Spleen (tissue), 13 donors: ENCODE measurements at regions of chr13 and their contacts with region 1.

Region 1: GRCh38 chr13:52194184-52194868 is 34.9 kb upstream of the NEK3 start:
- DNase-seq: peak; percentile 94
- H3K4me3 ChIP-seq: peak overlapping the region; percentile 68 to 98 (median 78)
- H3K27ac ChIP-seq: peak overlapping the region; percentile 80 to 91 (median 86)
- H3K4me1 ChIP-seq: peaks cover 14 to 49% (median 31%) of the 10 kb centered on the region in 6 donors
- H3K27me3 ChIP-seq: no peaks in the 10 kb centered on the region
- CTCF ChIP-seq: peak in 1 of 11 experiments; percentile 11
- POLR2A ChIP-seq: no peak

Region 2: GRCh38 chr13:52011632-52012511 is 182.5 kb before region 1 on chr13 and contains the start of gene ALG11:
- intact Hi-C with region 1: loop called (anchors 10 kb)
- DNase-seq: peak; percentile 98
- H3K4me3 ChIP-seq: peak within 1 kb of the TSS; percentile 82 to 100 (median 98)
- H3K27ac ChIP-seq: peak within 1 kb of the TSS; percentile 13 to 83 (median 70)
- H3K4me1 ChIP-seq: peaks cover 17 to 49% (median 34%) of the 10 kb centered on the region in 6 donors
- H3K27me3 ChIP-seq: peaks cover 0 to 33% (median 8%) of the 10 kb centered on the region in 7 donors
- CTCF ChIP-seq: peak in 3 of 11 experiments; percentile 10 to 51 (median 26)
- POLR2A ChIP-seq: peak in 1 of 3 donors; percentile 34
- total RNA-seq, gene ALG11: 23.1 to 32.2 (median 29.1) TPM

Region 3: DNA sequence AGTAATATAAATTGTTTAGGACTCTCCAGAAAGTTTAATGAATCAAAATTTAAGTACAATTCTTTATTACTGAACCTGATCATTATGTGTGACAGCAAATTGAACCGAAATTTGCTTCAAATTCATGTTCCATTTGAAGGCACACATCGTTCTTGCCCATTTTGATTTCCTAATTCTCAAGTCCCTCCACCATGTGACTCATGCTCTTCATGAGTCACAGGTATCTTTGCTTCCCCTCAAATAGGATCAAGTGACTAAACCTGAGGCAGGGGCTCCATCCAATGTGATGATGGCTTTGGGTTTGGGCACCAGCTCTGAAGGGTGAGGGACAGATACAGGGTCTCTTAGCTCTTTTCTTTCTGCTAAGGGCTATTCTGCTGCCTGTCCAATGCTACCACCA is 125.5 kb after region 1 on chr13:
- intact Hi-C with region 1: no loop called
- DNase-seq: no peak
- H3K4me3 ChIP-seq: no peak overlapping the region
- H3K27ac ChIP-seq: no peak overlapping the region
- H3K4me1 ChIP-seq: no peaks in the 10 kb centered on the region
- H3K27me3 ChIP-seq: peaks cover 0 to 6% (median 0%) of the 10 kb centered on the region in 7 donors
- CTCF ChIP-seq: no peak
- POLR2A ChIP-seq: no peak